Lower lobe of right lung (tissue), 2 donors: ENCODE measurements at regions of chr18 and their contacts with region 1.

Region 1: GRCh38 chr18:623761-624620 is 27.2 kb downstream of the CLUL1 start:
- DNase-seq: peak; percentile 68
- ATAC-seq: peak; percentile 81
- H3K4me3 ChIP-seq: no peak overlapping the region
- H3K27ac ChIP-seq: no peak overlapping the region
- H3K4me1 ChIP-seq: no peaks in the 10 kb centered on the region
- H3K27me3 ChIP-seq: no peaks in the 10 kb centered on the region
- CTCF ChIP-seq: peak; percentile 77

Region 2: DNA sequence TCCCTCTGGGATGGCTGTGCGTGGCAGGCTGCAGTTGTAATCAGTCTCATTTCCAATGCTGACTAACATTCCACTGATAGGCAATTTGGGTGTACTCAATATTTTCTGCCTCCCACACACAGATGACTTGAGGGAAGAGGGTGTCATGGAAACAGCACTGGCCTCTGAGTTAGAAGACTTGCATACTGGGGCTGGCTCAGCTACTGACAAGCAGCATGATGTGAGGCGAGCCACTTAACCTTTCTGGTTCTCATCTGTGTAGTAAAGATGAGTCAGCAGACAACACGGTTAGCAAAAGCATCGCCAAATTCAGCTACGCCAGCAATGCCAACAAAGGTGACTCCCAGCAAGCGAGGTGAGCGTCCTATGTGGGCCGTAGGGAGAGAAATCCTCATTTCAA is 197.0 kb before region 1 on chr18:
- intact Hi-C with region 1: no loop called
- DNase-seq: no peak
- ATAC-seq: no peak
- H3K4me3 ChIP-seq: no peak overlapping the region
- H3K27ac ChIP-seq: no peak overlapping the region
- H3K4me1 ChIP-seq: no peaks in the 10 kb centered on the region
- H3K27me3 ChIP-seq: no peaks in the 10 kb centered on the region
- CTCF ChIP-seq: no peak

Region 3: DNA sequence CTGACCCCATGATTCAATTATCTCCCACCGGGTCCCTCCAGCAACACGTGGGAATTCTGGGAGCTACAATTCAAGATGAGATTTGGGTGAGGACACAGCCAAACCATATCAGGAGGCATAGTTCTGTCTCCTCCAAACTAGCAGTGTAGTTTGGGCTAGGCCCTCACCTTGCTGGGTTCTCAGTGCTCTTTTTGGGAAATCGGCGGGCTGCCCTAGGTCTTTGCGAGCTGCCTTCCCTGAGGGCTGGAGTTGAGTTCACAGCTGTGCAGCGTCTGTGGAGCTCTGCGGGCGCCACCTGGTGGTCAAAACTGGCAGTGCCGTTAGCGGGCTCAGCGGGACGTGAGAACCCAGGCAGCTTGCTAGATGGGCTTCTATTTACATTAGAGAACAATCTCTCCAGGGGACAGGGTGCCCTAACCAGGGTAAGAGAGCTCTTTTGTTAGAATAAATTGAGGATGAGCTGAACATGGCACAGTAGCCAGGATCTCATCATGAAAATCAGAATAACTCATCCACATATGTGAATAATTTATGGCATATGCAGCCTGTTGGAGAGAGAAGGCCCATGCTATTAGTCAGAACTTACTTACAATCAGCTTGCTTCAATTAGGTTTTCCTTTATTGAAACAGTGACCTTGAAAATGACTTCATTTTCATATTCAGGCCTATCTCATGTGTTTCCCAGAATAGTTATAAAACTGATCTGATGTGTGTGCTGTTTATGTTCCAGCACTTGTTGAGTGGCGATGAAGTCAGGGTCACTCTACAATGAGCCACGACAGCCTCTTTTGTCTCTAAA is 215.4 kb after region 1 on chr18:
- intact Hi-C with region 1: loop called (anchors 10 kb)
- DNase-seq: peak; percentile 90
- ATAC-seq: peak; percentile 94 to 96
- H3K4me3 ChIP-seq: no peak overlapping the region
- H3K27ac ChIP-seq: no peak overlapping the region
- H3K4me1 ChIP-seq: peaks cover 4% of the 10 kb centered on the region
- H3K27me3 ChIP-seq: no peaks in the 10 kb centered on the region
- CTCF ChIP-seq: peak; percentile 100